OCI-LY7 (cell line): ENCODE measurements at regions of chr4 and their contacts with region 1.

Region 1: DNA sequence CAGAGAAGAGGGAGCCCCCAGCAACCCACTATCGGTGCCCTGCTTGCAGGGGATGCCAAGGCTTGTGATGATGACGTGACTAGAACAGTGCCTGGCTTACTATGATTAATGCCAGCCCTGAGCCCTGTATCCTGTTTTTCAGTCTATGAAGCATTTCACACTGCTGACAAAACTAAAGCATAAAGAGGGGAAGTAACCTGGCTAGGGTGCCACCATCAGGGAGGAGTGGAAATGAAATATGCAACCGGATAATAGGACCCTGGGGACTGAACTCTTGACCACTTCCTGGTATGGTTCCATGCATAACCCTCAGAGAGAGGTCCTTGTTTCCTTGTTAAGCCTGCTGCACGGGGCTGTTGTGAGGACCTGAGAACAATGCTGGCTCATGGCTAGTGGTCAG is 50.3 kb downstream of the MED28 start:
- DNase-seq: peak; percentile 93
- H3K4me3 ChIP-seq: peak overlapping the region; percentile 50
- H3K27ac ChIP-seq: peak overlapping the region; percentile 67
- H3K4me1 ChIP-seq: peaks cover 47% of the 10 kb centered on the region
- CTCF ChIP-seq: peak; percentile 66

Region 2: GRCh38 chr4:17336524-17336961 is 328.2 kb before region 1 on chr4:
- CTCF ChIA-PET with region 1: no interaction called
- POLR2A ChIA-PET with region 1: no interaction called
- intact Hi-C with region 1: loop called (anchors 10 kb)
- DNase-seq: peak; percentile 95
- H3K4me3 ChIP-seq: peak overlapping the region; percentile 50
- H3K27ac ChIP-seq: peak overlapping the region; percentile 92
- H3K4me1 ChIP-seq: peaks cover 81% of the 10 kb centered on the region
- CTCF ChIP-seq: no peak

Region 3: DNA sequence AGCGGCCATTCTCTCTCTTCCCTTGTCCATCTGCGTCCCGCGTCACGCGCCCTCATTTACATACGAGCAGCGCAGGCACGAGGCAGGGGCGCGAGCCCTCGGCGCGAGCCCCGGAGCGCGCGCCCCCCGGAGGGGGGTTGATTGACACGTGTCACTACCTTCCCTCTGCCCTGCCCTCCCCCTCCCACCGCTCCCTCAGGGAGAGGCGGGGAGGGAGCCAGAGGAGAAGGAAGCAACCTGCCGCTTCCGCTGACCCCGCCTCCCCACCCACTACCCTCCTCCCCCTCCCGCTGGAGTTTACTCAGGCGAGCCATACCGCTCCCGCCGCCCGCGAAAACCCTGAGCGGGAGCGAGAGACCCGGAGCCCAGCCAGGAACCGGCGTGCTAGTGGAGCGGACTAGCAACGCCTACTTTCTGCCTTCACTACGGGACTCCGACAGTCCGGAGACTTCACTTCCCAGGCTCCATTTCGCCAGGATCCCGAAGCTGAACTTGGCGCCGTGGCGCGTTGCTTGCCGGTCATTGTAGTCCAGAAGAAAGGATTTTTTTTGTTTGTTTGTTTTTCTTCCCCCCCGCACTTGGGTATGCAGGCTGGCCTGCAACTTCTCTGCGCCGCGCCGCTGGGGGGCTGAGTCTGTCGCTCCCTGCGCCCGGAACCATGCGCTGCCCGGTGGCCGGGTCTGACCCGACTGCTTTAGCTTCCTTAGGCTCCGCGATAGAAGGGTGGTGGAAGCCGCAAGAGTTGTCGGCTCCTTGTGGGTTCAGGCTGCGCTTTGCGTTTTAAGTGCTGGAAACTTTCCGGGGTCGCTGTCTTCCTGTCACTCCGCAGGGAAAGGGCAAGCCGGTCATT is 357.2 kb after region 1 on chr4 and contains the start of gene LCORL:
- CTCF ChIA-PET with region 1: no interaction called
- POLR2A ChIA-PET with region 1: no interaction called
- intact Hi-C with region 1: loop called (anchors 10 kb)
- DNase-seq: peak; percentile 96
- H3K4me3 ChIP-seq: peak within 1 kb of the TSS; percentile 99
- H3K27ac ChIP-seq: peak within 1 kb of the TSS; percentile 79
- H3K4me1 ChIP-seq: peaks cover 23% of the 10 kb centered on the region
- CTCF ChIP-seq: peak; percentile 60
- total RNA-seq, gene LCORL: 16.0 and 31.4 TPM in 2 replicates

Region 4: GRCh38 chr4:18980516-18981233 is 1315.9 kb after region 1 on chr4:
- CTCF ChIA-PET with region 1: no interaction called
- POLR2A ChIA-PET with region 1: no interaction called
- intact Hi-C with region 1: loop called (anchors 10 kb)
- DNase-seq: peak; percentile 98
- H3K4me3 ChIP-seq: peak overlapping the region; percentile 44
- H3K27ac ChIP-seq: peak overlapping the region; percentile 98
- H3K4me1 ChIP-seq: peaks cover 35% of the 10 kb centered on the region
- CTCF ChIP-seq: no peak